Mammary epithelial cell (primary cell): ENCODE measurements at regions of chr3 and their contacts with region 1.

Region 1: DNA sequence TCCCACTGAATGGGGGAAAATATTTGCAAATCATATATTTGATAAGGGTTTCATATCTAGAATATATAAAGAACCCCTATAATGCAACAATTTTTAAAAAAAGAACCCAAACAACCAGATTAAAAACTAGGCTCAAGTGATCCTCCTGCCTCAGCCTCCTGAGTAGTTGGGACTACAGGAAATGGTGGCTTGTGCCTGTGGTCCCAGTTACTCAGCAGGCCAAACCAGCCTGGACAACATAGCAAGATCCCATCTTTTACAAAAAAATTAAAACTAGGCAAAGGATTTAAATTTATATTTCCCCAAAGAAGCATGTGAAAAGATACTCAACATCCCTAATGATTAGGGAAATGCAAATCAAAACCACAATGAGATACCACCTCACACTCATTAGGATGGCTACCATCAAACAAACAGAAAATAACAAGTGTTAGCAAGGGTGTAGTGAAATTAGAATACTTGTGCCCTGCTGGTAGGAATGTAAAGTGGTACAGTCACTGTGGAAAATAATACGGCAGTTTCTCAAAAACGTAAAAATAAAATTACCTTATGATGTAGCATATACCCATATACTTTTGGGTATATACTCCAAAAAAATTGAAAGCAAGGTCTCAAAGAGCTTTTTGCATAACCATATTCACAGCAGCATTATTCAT is 19.7 kb downstream of the TFDP2 start:
- DNase-seq: no peak
- H3K4me3 ChIP-seq: no peak overlapping the region
- H3K27ac ChIP-seq: no peak overlapping the region
- H3K4me1 ChIP-seq: no peaks in the 10 kb centered on the region
- H3K27me3 ChIP-seq: no peaks in the 10 kb centered on the region
- CTCF ChIP-seq: no peak

Region 2: DNA sequence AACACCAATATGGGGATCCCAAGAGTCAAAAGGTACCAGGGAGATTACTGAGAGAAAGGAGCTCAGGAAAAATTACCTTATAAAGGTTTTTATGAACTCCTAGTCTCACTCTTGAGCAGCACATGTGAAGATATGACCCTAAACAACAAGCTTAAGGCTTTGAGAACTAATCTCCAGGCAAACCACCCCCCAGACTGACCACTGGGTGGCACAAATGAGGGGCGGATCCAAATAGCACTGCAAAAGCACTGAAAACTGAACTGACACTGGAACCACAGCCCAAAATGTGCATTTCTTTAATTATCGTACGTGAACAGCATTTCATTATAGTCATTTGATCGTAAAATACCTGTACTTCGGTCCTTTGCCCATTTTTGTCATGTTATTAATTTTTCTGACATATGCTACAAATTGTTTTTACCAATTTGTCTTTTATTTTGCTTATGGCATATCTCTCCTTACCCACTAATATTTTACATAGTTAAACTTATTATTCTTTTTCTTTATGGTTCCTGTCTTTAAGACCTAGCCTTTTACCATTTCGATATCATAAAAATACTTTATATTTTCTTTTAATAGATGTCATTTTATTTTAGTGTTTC is 51.2 kb after region 1 on chr3:
- CTCF ChIA-PET with region 1: no interaction called
- dilution Hi-C with region 1: no loop called
- in situ Hi-C with region 1: no loop called
- intact Hi-C with region 1: loop called (anchors 2 kb)
- DNase-seq: peak; percentile 1
- H3K4me3 ChIP-seq: no peak overlapping the region
- H3K27ac ChIP-seq: no peak overlapping the region
- H3K4me1 ChIP-seq: no peaks in the 10 kb centered on the region
- H3K27me3 ChIP-seq: no peaks in the 10 kb centered on the region
- CTCF ChIP-seq: peak; percentile 45 to 62

Region 3: DNA sequence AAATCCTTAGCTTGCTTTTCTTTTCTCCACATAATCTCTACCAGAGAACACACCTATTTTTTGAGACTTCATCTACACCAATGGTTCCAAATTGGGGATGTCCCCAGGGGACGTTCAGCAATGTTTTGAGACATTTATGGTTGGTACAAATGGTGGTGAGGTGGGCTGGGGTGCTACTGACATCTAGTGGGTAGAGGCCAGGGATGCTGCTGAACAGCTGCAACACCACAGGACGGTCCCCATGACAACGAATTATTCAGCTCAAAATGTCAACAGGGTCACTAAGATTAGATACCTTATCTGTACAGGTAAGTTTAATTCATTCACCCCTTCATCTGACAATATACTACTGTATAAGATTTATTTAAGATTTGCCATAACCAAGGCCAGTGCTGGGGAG is 81.4 kb after region 1 on chr3:
- CTCF ChIA-PET with region 1: interaction called, 5 read pairs
- dilution Hi-C with region 1: no loop called
- in situ Hi-C with region 1: no loop called
- intact Hi-C with region 1: loop called (anchors 1 kb)
- DNase-seq: no peak
- H3K4me3 ChIP-seq: no peak overlapping the region
- H3K27ac ChIP-seq: no peak overlapping the region
- H3K4me1 ChIP-seq: no peaks in the 10 kb centered on the region
- H3K27me3 ChIP-seq: no peaks in the 10 kb centered on the region
- CTCF ChIP-seq: peak in 1 of 2 donors; percentile 24

Region 4: DNA sequence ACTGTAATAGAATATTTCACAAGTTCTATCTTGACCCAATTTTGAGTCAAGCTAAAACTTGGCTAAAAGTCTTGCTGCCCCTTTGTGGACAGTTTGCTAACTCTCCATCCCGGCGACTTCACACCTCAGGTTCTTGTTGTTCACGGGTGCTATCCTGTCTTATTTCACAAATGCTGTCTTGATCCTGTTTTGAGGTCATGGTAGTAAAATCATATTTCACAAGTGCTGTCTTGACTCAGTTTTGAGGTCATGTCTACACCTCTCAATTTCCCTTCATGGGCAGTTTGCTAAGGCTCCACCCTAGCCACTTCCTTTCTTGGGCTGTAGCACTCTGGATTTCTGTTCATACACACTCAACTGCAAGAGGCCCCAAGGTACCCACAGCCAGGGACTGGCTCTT is 140.8 kb after region 1 on chr3:
- CTCF ChIA-PET with region 1: interaction called, 16 read pairs
- dilution Hi-C with region 1: no loop called
- in situ Hi-C with region 1: no loop called
- intact Hi-C with region 1: no loop called
- DNase-seq: no peak
- H3K4me3 ChIP-seq: no peak overlapping the region
- H3K27ac ChIP-seq: no peak overlapping the region
- H3K4me1 ChIP-seq: peaks cover under 1% of the 10 kb centered on the region
- H3K27me3 ChIP-seq: no peaks in the 10 kb centered on the region
- CTCF ChIP-seq: peak in 1 of 2 donors; percentile 4

Region 5: GRCh38 chr3:142310439-142310838 is 180.8 kb after region 1 on chr3:
- CTCF ChIA-PET with region 1: no interaction called
- dilution Hi-C with region 1: no loop called
- in situ Hi-C with region 1: no loop called
- intact Hi-C with region 1: no loop called
- DNase-seq: no peak
- H3K4me3 ChIP-seq: no peak overlapping the region
- H3K27ac ChIP-seq: no peak overlapping the region
- H3K4me1 ChIP-seq: no peaks in the 10 kb centered on the region
- H3K27me3 ChIP-seq: no peaks in the 10 kb centered on the region
- CTCF ChIP-seq: no peak